Activated CD4-positive, alpha-beta T cell treated with anti-CD3 and anti-CD28 coated beads for 36 hours (primary cell): ENCODE measurements at regions of chr2 and their contacts with region 1.

Region 1: DNA sequence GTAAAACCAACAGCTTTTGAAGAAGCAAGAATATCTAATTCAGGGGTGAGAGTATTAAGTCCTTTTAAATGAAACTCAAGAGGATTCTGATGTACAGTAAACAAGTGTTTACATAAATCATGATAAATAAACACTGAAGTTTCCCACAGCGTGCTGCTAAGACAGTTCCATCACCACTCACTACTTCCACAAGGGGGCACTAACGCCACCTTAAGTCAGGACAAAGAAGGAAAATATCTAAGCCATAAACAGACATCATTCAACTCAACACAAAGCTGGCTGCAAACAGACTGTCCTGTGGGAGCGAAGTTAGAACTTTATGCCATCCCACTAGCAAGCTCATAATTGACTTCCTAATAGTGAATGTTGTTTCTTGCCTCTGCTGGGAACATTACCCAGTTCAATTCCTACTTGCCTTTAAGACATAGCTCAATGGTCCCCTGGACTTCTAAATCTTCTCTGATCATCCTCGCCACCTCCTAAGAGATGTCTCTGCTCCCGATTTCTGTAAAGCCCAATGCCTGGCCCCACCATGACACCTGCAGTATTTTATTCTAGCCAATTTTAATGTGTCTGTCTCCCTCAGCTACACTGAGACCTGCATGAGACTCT is 36.5 kb downstream of the MRPL44 start:
- DNase-seq: peak; percentile 78
- ATAC-seq: peak; percentile 64
- H3K4me3 Mint-ChIP-seq: no peak overlapping the region
- H3K27ac Mint-ChIP-seq: peak overlapping the region; percentile 56
- H3K4me1 Mint-ChIP-seq: peaks cover 19% of the 10 kb centered on the region
- H3K27me3 Mint-ChIP-seq: no peaks in the 10 kb centered on the region

Region 2: GRCh38 chr2:223976635-223977226 is 17.0 kb before region 1 on chr2:
- CTCF ChIA-PET with region 1: interaction called, 77 read pairs
- POLR2A ChIA-PET with region 1: no interaction called
- intact Hi-C with region 1: no loop called
- DNase-seq: no peak
- ATAC-seq: peak; percentile 16
- H3K4me3 Mint-ChIP-seq: no peak overlapping the region
- H3K27ac Mint-ChIP-seq: no peak overlapping the region
- H3K4me1 Mint-ChIP-seq: no peaks in the 10 kb centered on the region
- H3K27me3 Mint-ChIP-seq: no peaks in the 10 kb centered on the region

Region 3: GRCh38 chr2:224025874-224026273 is 32.1 kb after region 1 on chr2:
- CTCF ChIA-PET with region 1: interaction called, 9 read pairs
- POLR2A ChIA-PET with region 1: no interaction called
- intact Hi-C with region 1: loop called in 1 of 2 experiments (anchors 2 kb)
- DNase-seq: peak; percentile 81
- ATAC-seq: peak; percentile 94
- H3K4me3 Mint-ChIP-seq: peak overlapping the region; percentile 50
- H3K27ac Mint-ChIP-seq: peak overlapping the region; percentile 94
- H3K4me1 Mint-ChIP-seq: peaks cover 72% of the 10 kb centered on the region
- H3K27me3 Mint-ChIP-seq: no peaks in the 10 kb centered on the region

Region 4: DNA sequence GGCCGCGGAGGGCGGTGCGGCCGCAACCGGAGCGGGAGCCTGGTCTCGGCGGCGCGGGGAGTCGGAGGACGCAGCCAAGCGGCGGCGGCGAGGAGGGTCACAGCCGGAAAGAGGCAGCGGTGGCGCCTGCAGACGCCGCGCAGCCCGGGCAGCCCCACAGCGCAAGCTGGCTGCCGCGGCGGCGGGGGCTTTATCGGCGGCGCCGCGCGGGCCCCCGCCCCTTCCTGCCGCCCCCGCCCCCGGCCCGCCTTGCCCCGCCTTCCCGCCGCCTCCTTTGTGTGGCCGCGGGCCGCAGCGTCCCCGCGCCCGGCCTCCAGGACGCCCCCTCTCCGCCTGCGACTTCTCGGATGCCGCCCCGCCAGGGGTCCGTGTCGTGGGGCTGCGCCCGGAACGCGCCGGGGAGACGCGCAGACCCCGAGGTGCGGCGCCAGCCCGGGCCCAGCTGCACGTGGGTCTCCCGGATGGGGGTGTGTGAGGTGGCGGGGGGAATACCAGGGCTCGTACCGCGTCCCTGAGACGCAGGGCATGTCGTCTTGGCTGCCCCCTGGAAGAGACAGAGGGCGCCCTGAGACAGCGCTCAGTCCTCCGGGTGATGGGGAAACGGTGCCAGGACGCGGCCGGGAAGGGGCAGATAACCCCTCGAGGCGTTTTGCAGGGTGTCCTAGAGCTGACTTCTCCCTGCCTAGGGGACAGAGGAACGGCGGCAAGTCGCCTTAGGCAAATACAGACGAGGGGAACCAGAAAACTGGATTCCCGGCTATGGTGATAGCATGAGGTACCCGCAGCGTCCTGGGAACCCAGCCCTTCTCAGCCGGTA is 45.6 kb after region 1 on chr2 and contains the start of gene SERPINE2:
- CTCF ChIA-PET with region 1: interaction called, 13 read pairs
- POLR2A ChIA-PET with region 1: no interaction called
- intact Hi-C with region 1: loop called in 1 of 2 experiments (anchors 1 kb)
- DNase-seq: peak; percentile 75
- ATAC-seq: peak; percentile 73
- H3K4me3 Mint-ChIP-seq: peak within 1 kb of the TSS; percentile 83
- H3K27ac Mint-ChIP-seq: peak within 1 kb of the TSS; percentile 40
- H3K4me1 Mint-ChIP-seq: peaks cover 15% of the 10 kb centered on the region
- H3K27me3 Mint-ChIP-seq: peaks cover 51% of the 10 kb centered on the region
- total RNA-seq, gene SERPINE2: 30.9 to 46.6 TPM

Region 5: DNA sequence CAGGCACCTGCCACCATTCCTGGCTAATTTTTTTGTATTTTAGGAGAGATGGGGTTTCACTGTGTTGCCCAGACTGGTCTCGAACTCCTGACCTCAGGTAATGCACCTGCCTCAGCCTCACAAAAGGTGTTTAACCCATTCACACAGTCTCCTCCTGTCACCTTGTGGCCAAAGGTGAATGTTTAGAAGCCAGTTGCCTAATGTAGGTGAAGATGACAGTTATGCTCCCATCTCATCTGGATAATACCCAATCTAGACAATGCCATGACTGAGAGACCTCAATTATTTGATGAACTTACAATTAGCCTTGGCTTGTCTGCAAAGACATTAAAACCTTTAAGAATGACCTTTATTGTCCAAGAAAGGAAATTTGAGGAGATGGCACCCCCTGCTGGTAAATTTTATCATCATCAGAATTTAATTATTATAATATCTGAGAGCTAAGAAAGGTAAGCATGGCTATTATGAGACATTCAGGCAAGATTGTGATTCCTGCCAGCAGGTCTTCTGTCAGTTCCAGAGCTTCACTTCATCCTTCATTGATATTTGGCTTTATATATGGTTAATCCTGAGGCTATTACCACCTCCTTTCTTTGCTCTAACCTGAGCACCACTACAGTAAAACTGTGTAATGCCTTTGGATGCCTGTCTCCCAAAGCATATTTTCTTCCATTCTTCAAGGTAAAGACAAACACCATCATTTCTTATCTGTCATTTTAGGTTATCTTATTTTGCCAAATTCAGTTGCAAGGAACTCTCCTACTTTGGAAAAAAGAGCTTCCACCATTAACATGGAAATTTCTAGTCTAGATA is 290.6 kb after region 1 on chr2:
- CTCF ChIA-PET with region 1: interaction called, 176 read pairs
- POLR2A ChIA-PET with region 1: interaction called, 3 read pairs
- intact Hi-C with region 1: loop called (anchors 1 kb)
- DNase-seq: peak; percentile 22
- ATAC-seq: peak; percentile 58
- H3K4me3 Mint-ChIP-seq: no peak overlapping the region
- H3K27ac Mint-ChIP-seq: no peak overlapping the region
- H3K4me1 Mint-ChIP-seq: no peaks in the 10 kb centered on the region
- H3K27me3 Mint-ChIP-seq: peaks cover 13% of the 10 kb centered on the region

Region 6: GRCh38 chr2:224369028-224369632 is 375.4 kb after region 1 on chr2:
- CTCF ChIA-PET with region 1: interaction called, 4 read pairs
- POLR2A ChIA-PET with region 1: no interaction called
- intact Hi-C with region 1: loop called in 1 of 2 experiments (anchors 1 kb)
- DNase-seq: no peak
- ATAC-seq: peak; percentile 60
- H3K4me3 Mint-ChIP-seq: no peak overlapping the region
- H3K27ac Mint-ChIP-seq: no peak overlapping the region
- H3K4me1 Mint-ChIP-seq: no peaks in the 10 kb centered on the region
- H3K27me3 Mint-ChIP-seq: no peaks in the 10 kb centered on the region